Activated T-helper 2 cell treated with anti-CD3 and anti-CD28 coated beads, Interferon-gamma antibody, Interleukin-2, Interleukin-4, amounts not matched to agents 10 μg/mL and 5 μg/mL and 100 μg/mL, durations not matched to agents 14 hours and 24 hours and 36 hours (primary cell): ENCODE measurements at regions of chr11 and their contacts with region 1.

Region 1: GRCh38 chr11:95688580-95689189 is 100.9 kb downstream of the FAM76B start:
- DNase-seq: no peak
- H3K4me3 Mint-ChIP-seq: peak overlapping the region; percentile 15
- H3K27ac Mint-ChIP-seq: no peak overlapping the region
- H3K4me1 Mint-ChIP-seq: peaks cover 21% of the 10 kb centered on the region
- H3K27me3 Mint-ChIP-seq: no peaks in the 10 kb centered on the region

Region 2: DNA sequence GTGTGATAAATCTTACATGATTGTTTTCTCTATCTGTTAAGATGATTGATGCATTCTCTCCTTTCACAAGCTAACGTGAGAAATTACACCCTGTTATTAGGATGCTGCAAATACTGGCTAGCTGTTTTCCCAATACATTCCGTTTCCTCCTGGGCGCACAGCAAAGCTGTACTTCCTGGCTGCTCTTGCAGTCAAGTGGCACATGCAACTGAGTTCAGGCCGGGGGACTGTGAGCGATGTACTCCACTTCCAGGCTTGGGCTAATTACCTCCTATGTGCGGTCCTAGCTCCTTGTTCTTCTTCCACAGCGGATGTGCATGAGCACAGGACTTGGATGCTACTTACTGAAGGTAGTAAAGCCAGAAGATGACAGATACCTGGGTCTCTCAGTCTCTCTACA is 222.8 kb before region 1 on chr11:
- intact Hi-C with region 1: no loop called
- DNase-seq: no peak
- H3K4me3 Mint-ChIP-seq: no peak overlapping the region
- H3K27ac Mint-ChIP-seq: no peak overlapping the region
- H3K4me1 Mint-ChIP-seq: no peaks in the 10 kb centered on the region
- H3K27me3 Mint-ChIP-seq: peaks cover 2% of the 10 kb centered on the region

Region 3: DNA sequence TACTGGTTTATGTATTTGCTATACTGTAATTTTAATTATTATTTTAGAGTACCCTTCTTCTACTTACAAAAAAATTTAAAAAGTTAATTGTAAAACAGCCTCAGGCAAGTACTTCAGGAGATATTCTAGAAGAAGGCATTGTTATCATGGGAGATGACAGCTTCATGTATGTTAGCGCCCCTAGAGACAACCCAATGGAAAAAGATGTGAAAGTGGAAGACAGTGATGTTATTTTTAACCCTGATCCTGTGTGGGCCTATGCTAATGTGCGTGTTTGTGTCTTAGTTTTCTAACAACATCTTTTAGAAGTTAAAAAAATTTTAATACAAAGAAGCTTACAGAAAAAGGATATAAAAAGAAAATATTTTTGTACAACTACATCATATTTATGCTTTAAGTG is 104.1 kb before region 1 on chr11:
- intact Hi-C with region 1: loop called (anchors 2 kb)
- DNase-seq: no peak
- H3K4me3 Mint-ChIP-seq: no peak overlapping the region
- H3K27ac Mint-ChIP-seq: no peak overlapping the region
- H3K4me1 Mint-ChIP-seq: peaks cover 29% of the 10 kb centered on the region
- H3K27me3 Mint-ChIP-seq: no peaks in the 10 kb centered on the region

Region 4: GRCh38 chr11:95661162-95661561 is 27.5 kb before region 1 on chr11:
- intact Hi-C with region 1: loop called (anchors 2 kb)
- DNase-seq: no peak
- H3K4me3 Mint-ChIP-seq: no peak overlapping the region
- H3K27ac Mint-ChIP-seq: no peak overlapping the region
- H3K4me1 Mint-ChIP-seq: peaks cover 26% of the 10 kb centered on the region
- H3K27me3 Mint-ChIP-seq: no peaks in the 10 kb centered on the region

Region 5: DNA sequence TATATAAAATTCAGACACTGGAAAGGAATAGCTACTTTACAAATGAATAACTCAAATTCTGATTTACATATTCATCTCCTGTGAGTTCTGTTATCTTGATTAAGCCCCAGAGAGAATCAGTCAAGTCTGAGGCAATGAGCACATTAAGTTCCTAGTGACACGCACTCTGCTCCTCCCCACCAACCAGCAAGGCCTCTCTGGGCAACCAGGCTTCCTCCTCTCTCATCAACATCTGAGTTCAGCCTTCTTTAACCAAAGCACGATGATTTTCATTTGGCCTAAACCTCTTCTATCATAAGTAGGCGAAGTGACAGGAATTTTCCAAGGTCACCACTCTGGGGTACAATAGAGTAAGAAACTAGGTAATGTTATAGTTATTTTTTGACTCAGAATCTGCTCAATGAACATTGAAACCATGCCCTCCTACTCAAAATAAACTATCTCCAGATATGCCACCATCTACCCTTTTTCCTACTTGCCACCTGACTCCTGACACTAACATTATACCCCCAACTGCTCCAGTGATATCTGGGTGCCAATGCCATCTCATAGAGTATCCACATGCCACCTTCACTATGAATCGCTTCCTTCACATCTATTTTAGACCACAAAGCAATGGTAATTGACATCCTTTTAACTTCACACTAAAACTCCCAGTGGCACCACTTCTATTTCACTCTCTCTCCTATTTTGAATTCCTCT is 13.9 kb before region 1 on chr11:
- intact Hi-C with region 1: loop called (anchors 1 kb)
- DNase-seq: no peak
- H3K4me3 Mint-ChIP-seq: no peak overlapping the region
- H3K27ac Mint-ChIP-seq: peak overlapping the region; percentile 78
- H3K4me1 Mint-ChIP-seq: peaks cover 54% of the 10 kb centered on the region
- H3K27me3 Mint-ChIP-seq: no peaks in the 10 kb centered on the region